HAP-1 (cell line): ENCODE measurements at regions of chr4 and their contacts with region 1.

Region 1: GRCh38 chr4:6720202-6720699 is 4.3 kb downstream of the BLOC1S4 start:
- DNase-seq: peak; percentile 73 to 95
- H3K4me3 ChIP-seq: no peak overlapping the region
- H3K4me1 ChIP-seq: peaks cover 5% of the 10 kb centered on the region
- H3K27me3 ChIP-seq: no peaks in the 10 kb centered on the region

Region 2: DNA sequence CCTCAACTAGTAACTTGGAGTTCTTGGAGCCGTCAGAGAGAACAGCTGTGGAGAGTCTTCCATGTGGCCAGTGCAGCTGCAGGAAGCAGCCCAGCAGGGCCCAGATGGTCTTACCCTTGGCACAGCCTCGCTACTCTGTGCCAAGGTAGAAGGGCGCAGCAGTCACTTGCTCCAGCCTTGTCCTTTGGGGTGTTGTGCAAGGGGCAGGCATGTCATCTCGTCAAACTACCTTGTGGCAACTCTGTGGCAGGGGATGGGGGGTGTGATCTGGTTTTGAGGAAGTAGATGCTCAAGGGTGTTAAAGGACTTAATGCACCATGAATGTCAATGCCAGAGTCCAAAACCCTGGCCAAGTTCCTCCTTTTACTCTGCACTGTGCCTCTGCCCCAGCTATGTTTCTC is 155.2 kb after region 1 on chr4:
- in situ Hi-C with region 1: loop called (anchors 5 kb)
- DNase-seq: no peak
- H3K4me3 ChIP-seq: no peak overlapping the region
- H3K4me1 ChIP-seq: no peaks in the 10 kb centered on the region
- H3K27me3 ChIP-seq: no peaks in the 10 kb centered on the region

Region 3: DNA sequence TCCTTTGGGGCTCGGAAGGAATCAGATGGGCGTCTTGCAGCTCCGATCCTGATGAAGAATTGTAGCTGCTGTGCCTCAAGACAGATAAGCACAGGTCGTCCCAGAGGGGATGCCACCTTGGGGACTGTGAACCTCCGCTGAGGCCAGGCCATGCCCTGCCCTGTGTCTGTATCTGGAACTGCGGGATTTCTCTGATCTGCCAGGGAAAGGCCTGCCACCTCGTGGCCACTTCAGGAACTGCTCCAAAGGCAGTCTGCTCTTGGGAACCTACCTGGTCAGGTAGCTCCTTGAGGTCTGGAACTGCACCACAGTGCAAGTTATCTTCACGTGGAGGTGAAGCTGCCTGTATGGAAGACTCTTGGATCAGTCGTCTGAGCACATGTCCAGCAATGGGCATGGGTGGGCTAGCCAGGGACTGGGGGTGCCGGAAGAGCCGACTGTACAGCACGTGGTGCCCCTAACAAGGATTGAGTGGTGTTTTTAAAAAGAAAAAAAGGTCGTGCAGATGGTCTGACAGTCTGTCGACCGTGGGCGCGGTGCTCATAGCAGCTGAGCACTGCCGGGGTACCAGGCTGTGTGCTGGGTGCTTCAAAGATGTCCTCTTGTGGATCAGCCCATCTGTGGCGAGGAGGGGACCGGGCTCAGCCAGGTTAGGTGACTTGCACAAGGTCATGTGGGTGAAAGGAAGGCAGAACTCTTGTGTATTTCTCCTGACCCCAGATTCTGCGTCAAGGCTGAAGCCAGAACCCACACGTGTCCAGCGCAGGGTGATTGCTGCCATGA is 350.7 kb after region 1 on chr4:
- in situ Hi-C with region 1: loop called (anchors 5 kb)
- DNase-seq: peak; percentile 72 to 88
- H3K4me3 ChIP-seq: no peak overlapping the region
- H3K4me1 ChIP-seq: peaks cover 19% of the 10 kb centered on the region
- H3K27me3 ChIP-seq: no peaks in the 10 kb centered on the region